H1 (cell line): ENCODE measurements at regions of chr2 and their contacts with region 1.

Region 1: DNA sequence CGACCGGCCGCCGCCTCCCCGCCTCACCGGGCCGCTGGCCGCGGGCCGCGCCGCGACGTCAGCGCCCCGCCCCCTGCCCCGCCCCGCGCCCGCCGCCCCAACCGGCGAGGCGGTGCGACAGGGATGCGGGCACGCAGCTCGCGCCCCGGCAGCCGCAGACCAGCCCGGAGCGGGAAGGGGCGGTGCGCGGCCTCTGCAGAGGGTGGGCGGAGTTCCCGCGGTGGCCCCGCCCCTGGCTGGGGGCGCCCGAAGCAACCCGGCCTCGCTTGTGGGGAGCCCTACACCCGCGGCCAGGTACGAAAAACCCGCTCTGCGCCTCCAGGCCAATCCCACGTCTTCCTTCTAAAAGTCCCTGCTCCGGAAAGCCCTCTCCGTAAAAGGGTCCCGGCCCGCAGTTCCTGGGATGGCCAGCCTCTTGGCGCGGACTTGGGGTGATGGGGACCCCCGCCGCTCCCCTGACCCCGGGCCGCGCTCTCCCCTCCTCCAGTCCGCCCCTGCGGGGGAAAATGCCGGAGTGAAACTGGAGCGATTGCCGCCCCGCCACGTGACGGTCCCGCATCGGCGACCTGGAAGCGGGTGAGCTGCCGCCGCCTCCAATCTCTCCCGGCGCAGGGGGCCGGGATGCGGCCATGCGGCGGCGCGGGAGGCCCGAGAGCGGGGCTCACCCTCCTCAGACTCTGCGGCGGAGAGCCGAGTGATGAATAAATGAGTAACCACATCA is at the start of gene RAB11FIP5:
- DNase-seq: peak in 1 of 2 experiments; percentile 91
- H3K4me3 ChIP-seq: peak within 1 kb of the TSS; percentile 58 to 73 (median 66)
- H3K27ac ChIP-seq: no peak within 1 kb of the TSS
- H3K4me1 ChIP-seq: peaks cover 10 to 14% (median 12%) of the 10 kb centered on the region in 4 experiments; a peak in 6 of 7 replicates
- H3K27me3 ChIP-seq: no peaks in the 10 kb centered on the region; a peak in 2 of 7 replicates
- CTCF ChIP-seq: no peak
- EP300 ChIP-seq: no peak
- POLR2A ChIP-seq: 0 out of 3 replicates have a peak, but pooled peaks of 1 of the 2 experiments have one; percentile 26
- RAD21 ChIP-seq: no peak
- total RNA-seq, gene RAB11FIP5: 13.5 and 17.0 TPM in 2 replicates

Region 2: DNA sequence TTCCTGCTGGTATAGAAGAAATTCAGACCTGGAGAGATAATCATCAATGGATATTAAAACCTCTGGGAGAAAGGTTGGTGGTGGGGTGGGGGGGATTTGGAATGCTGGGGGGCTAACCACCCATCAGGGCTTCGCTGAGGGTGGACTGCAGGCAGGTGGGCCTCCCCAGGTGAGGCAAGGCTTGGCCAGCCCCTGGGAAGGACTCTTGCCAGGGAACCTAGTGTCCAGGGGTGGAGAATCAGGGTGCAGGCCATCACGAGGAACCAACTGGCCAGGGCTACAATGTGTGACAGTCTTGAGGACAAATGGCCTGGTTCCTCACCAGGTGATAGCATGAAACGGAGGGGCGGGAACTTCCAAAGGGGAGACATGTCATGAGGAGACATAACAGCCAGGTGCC is 12.1 kb before region 1 on chr2:
- CTCF ChIA-PET with region 1: interaction called, 9 read pairs
- POLR2A ChIA-PET with region 1: interaction called, 12 read pairs
- DNase-seq: no peak
- H3K4me3 ChIP-seq: no peak overlapping the region
- H3K27ac ChIP-seq: no peak overlapping the region
- H3K4me1 ChIP-seq: peaks cover 4 to 11% (median 9%) of the 10 kb centered on the region in 4 experiments; a peak in 5 of 7 replicates
- H3K27me3 ChIP-seq: no peaks in the 10 kb centered on the region
- CTCF ChIP-seq: no peak
- EP300 ChIP-seq: no peak
- POLR2A ChIP-seq: no peak
- RAD21 ChIP-seq: no peak